ENCODE measurements at regions of chr7 and their contacts with region 1.

Region 1: DNA sequence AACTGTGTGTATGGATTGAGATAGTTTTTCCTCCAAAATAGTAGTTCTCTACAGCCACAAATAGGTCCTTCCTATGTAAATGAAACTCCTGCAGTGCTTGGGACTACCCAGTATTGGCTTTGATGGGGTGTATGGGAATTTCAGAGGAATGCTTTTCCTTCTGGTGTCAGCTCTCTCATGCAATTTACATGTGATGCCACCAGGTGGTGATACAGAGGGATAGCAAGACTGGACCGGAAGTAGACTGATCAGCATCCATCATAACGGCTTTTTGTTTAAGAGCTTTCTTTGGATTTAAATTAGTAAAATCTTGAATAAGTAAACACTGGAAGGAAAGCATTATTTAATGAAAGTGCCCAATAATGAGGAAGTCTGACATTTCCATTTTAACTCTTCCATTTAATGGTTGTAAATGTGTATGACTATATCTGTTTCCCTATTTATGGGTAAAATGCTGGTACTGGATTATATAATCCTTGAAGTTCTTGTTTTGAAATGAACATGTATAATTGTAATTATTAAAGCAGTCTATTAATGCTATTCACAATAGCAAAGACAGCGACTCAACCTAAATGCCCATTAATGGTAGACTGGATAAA is 22.7 kb downstream of the DYNC1I1 start:
- DNase-seq: no peak
- H3K4me3 ChIP-seq: no peak overlapping the region
- H3K27ac ChIP-seq: no peak overlapping the region
- H3K27me3 ChIP-seq: no peaks in the 10 kb centered on the region
- CTCF ChIP-seq: peak in 35 of 56 donors; percentile 8 to 47 (median 26)

Region 2: DNA sequence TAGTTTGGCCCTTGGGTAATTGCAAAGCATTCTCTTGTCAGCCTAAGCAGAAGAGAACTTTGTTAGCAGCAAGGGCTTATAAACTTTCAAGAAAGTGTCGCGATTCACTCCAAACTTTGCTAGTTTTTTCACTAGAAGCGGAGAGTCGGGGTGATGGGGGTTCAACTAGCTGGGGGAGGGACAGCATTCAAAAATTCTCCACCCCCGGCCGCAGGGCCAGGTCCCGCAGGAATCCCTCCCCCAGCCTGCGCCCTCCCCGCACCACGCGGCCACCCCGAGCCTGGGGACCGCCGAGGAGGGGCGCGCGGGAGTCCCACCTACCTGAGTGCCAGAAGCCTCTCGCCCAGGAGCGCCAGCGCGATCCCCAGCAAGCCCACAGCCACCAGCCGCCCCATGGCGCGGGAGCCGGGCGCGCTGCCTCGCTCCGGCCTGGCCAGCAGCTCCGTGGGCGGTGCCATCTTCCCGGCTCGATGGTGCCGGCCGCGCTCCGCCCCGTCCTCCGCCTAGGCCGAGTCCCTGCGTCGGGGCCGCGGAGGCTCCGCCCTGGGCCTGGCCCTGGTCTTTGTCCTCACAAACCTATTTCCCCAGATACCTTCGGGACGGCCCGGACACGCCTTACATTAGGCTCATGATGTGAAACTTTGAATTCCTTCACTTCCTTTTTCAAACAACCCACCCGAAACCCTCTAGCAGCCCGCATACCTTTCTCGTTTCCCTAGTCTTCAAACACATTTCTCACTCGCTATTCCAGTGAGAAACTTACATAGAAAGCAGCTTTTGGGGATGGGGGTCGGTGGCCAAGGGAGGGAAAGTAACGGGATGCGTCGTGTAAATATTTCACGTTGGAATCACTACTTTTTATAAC is 360.2 kb before region 1 on chr7 and contains the start of gene PON2:
- intact Hi-C with region 1: no loop called
- DNase-seq: peak; percentile 5 to 77 (median 51)
- H3K4me3 ChIP-seq: peak within 1 kb of the TSS; percentile 52 to 93 (median 77)
- H3K27ac ChIP-seq: peak within 1 kb of the TSS; percentile 52 to 97 (median 93)
- H3K27me3 ChIP-seq: no peaks in the 10 kb centered on the region
- CTCF ChIP-seq: peak in 16 of 56 donors; percentile 6 to 36 (median 19)
- total RNA-seq, gene PON2: 79.1 to 321 (median 167) TPM

Region 3: DNA sequence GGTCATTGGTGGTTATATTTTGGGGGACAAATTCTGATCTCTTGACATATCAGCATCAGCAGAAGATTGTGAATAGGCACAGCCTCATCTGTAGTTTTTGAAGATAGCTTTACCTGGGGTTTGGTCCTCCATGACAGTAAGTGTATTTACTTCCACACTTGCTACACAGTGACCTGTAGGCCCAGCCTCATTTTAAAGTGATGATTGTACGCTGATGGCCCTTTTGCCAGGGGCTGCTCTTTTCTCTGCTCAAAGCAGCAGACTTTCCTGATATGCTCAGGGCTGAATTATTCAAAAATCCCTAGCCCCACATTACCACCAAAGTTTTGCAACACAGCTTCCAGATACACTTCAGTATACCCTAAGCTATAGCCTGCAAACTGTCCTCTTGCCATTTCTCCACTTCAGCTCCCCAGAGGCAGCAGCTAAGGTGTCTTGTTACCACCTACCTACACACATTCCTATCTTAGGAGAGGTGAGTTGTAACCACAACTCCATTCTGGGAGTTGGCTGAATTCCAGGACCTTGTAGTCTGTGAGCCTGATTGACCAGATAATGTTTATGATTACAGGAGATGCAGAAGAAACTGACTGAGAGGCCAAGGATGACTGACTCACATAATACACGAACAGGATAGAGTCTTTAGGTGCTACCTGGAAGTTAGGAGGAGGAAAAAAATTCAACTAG is 303.2 kb before region 1 on chr7:
- intact Hi-C with region 1: no loop called
- DNase-seq: no peak
- H3K4me3 ChIP-seq: no peak overlapping the region
- H3K27ac ChIP-seq: no peak overlapping the region
- H3K27me3 ChIP-seq: no peaks in the 10 kb centered on the region
- CTCF ChIP-seq: no peak

Region 4: GRCh38 chr7:95840953-95841950 is 46.2 kb after region 1 on chr7:
- intact Hi-C with region 1: loop called in 1 of 2 experiments (anchors 5 kb)
- DNase-seq: no peak
- H3K4me3 ChIP-seq: no peak overlapping the region
- H3K27ac ChIP-seq: no peak overlapping the region
- H3K27me3 ChIP-seq: no peaks in the 10 kb centered on the region
- CTCF ChIP-seq: no peak